ENCODE measurements at regions of chr17 and their contacts with region 1.

Region 1: DNA sequence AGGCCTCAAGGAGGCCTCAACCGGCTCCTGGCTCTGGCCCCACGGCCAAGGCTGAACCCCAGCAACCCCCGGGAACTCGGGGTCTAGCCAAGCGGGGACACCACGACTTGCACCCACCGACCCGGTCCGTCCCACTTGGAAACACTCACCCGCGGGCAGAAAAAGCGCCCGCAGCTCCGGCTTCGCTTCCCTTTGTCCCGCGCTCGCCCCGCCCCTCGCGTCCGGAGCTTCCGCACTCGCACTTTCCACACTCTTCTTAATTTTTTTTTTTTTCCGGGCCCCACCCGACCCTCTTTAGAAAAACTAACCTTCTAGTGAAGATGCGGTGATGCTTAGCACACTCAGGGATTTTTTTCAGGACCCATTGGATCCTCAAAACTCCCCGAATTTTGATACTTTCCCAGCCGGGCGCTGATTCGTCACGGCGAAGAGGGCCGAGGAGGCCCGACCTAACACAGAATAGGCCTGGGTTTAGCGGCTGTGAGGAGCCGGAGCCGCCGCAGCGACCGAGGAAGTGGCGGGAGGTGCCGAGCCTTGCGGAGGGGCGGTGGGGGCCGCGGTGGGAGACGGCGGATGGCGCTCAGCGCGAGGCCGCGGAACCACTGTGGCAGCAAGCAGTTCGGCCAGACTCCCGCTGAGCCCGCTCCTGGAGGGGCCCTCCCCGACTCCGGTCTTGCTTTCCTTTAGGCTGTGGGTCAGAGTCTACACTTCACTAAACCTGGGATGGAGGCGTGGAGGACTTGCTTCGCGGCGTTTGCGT is at the start of gene SMARCE1:
- DNase-seq: peak; percentile 87
- H3K4me3 ChIP-seq: peak within 1 kb of the TSS; percentile 90
- H3K27ac ChIP-seq: peak within 1 kb of the TSS; percentile 62
- H3K4me1 ChIP-seq: peaks cover 35% of the 10 kb centered on the region
- CTCF ChIP-seq: no peak
- total RNA-seq, gene SMARCE1: 75.9 and 98.7 TPM in 2 replicates

Region 2: GRCh38 chr17:40224718-40225550 is 422.9 kb before region 1 on chr17:
- CTCF ChIA-PET with region 1: no interaction called
- POLR2A ChIA-PET with region 1: no interaction called
- intact Hi-C with region 1: no loop called
- DNase-seq: no peak
- H3K4me3 ChIP-seq: no peak overlapping the region
- H3K27ac ChIP-seq: no peak overlapping the region
- H3K4me1 ChIP-seq: peaks cover 6% of the 10 kb centered on the region
- CTCF ChIP-seq: no peak

Region 3: GRCh38 chr17:40633871-40634270 is 13.9 kb before region 1 on chr17:
- CTCF ChIA-PET with region 1: interaction called, 3 read pairs
- POLR2A ChIA-PET with region 1: interaction called, 14 read pairs
- intact Hi-C with region 1: no loop called
- DNase-seq: no peak
- H3K4me3 ChIP-seq: no peak overlapping the region
- H3K27ac ChIP-seq: no peak overlapping the region
- H3K4me1 ChIP-seq: no peaks in the 10 kb centered on the region
- CTCF ChIP-seq: no peak